CD4-positive, alpha-beta T cell (primary cell): ENCODE measurements at regions of chr11 and their contacts with region 1.

Region 1: GRCh38 chr11:117098269-117099232 is at the start of gene SIK3:
- DNase-seq: peak; percentile 90 to 98 (median 93)
- ATAC-seq: peak; percentile 69
- H3K4me3 ChIP-seq: peak within 1 kb of the TSS; percentile 89
- H3K4me3 Mint-ChIP-seq: peak within 1 kb of the TSS; percentile 100
- H3K27ac ChIP-seq: peak within 1 kb of the TSS; percentile 81 to 95
- H3K27ac Mint-ChIP-seq: peak within 1 kb of the TSS; percentile 100
- H3K4me1 ChIP-seq: peaks cover 38% of the 10 kb centered on the region
- H3K4me1 Mint-ChIP-seq: peaks cover 51% of the 10 kb centered on the region
- H3K27me3 ChIP-seq: no peaks in the 10 kb centered on the region
- H3K27me3 Mint-ChIP-seq: no peaks in the 10 kb centered on the region
- CTCF ChIP-seq: peak; percentile 67
- total RNA-seq, gene SIK3: 81.4 to 86.1 TPM

Region 2: GRCh38 chr11:116772443-116773202 is 325.9 kb before region 1 on chr11 and contains the start of gene BUD13:
- CTCF ChIA-PET with region 1: no interaction called
- POLR2A ChIA-PET with region 1: interaction called, 3 read pairs
- intact Hi-C with region 1: loop called in 1 of 2 experiments (anchors 1 kb)
- DNase-seq: peak; percentile 90 to 96 (median 94)
- ATAC-seq: peak; percentile 92
- H3K4me3 ChIP-seq: peak within 1 kb of the TSS; percentile 92
- H3K4me3 Mint-ChIP-seq: peak within 1 kb of the TSS; percentile 99
- H3K27ac ChIP-seq: peak within 1 kb of the TSS; percentile 87 to 90
- H3K27ac Mint-ChIP-seq: peak within 1 kb of the TSS; percentile 95
- H3K4me1 ChIP-seq: peaks cover 23% of the 10 kb centered on the region
- H3K4me1 Mint-ChIP-seq: peaks cover 45% of the 10 kb centered on the region
- H3K27me3 ChIP-seq: no peaks in the 10 kb centered on the region
- H3K27me3 Mint-ChIP-seq: no peaks in the 10 kb centered on the region
- CTCF ChIP-seq: peak; percentile 16
- total RNA-seq, gene BUD13: 9.2 to 10.1 TPM

Region 3: GRCh38 chr11:117037279-117037974 is 61.1 kb before region 1 on chr11:
- CTCF ChIA-PET with region 1: no interaction called
- POLR2A ChIA-PET with region 1: interaction called, 4 read pairs
- intact Hi-C with region 1: loop called in 1 of 2 experiments (anchors 5 kb)
- DNase-seq: peak in 3 of 14 experiments; percentile 37 to 42 (median 40)
- ATAC-seq: peak; percentile 26
- H3K4me3 ChIP-seq: no peak overlapping the region
- H3K4me3 Mint-ChIP-seq: peak overlapping the region; percentile 50
- H3K27ac ChIP-seq: peak overlapping the region in 1 of 2 donors; percentile 68
- H3K27ac Mint-ChIP-seq: peak overlapping the region; percentile 72
- H3K4me1 ChIP-seq: peaks cover 17% of the 10 kb centered on the region
- H3K4me1 Mint-ChIP-seq: peaks cover 72% of the 10 kb centered on the region
- H3K27me3 ChIP-seq: no peaks in the 10 kb centered on the region
- H3K27me3 Mint-ChIP-seq: no peaks in the 10 kb centered on the region
- CTCF ChIP-seq: no peak

Region 4: DNA sequence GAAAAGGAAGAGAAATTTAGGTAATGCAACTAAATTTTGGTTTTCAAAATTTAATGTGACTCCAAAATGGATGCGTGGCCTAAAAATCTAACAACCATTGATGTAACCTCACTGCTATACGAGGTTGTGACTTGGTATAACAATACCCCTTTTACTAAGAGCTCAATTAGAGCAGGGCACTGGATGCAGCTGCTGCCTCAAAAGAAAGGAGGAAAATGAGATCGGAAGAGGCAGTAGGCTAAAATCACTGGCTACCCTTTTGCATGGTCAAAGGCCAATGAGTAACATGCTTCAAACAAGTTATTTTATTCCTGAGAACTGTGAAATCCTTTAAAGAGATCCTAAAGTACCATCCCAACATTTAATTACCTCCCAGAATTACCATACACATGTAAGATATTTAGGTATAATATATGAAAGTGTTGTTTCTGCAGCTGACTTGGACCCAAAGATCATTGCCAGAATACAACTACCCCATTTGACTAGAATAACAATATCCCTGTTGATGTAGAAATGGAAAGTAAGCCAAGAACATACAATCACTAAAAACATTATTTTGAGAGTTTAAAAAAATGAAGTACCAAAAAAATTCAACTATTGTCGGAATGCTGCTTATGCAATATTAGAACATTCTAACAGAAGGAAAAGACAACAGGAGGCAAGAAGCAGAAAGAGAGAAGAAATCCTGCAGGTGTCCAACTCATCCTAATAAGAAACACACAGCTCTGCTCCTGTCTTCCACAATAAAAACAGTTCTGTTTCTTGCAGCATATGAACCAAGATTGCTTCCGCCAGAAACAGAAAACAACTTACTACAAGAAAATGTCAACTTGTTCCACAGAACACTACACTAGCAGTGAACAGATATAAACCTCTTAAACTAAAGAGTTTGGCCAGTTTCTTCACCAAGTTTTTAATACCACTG is 15.3 kb before region 1 on chr11:
- CTCF ChIA-PET with region 1: no interaction called
- POLR2A ChIA-PET with region 1: interaction called, 5 read pairs
- intact Hi-C with region 1: loop called in 1 of 2 experiments (anchors 2 kb)
- DNase-seq: no peak
- ATAC-seq: no peak
- H3K4me3 ChIP-seq: no peak overlapping the region
- H3K4me3 Mint-ChIP-seq: no peak overlapping the region
- H3K27ac ChIP-seq: no peak overlapping the region
- H3K27ac Mint-ChIP-seq: no peak overlapping the region
- H3K4me1 ChIP-seq: peaks cover 28% of the 10 kb centered on the region
- H3K4me1 Mint-ChIP-seq: peaks cover 81% of the 10 kb centered on the region
- H3K27me3 ChIP-seq: no peaks in the 10 kb centered on the region
- H3K27me3 Mint-ChIP-seq: no peaks in the 10 kb centered on the region
- CTCF ChIP-seq: no peak

Region 5: GRCh38 chr11:117634756-117635603 is 536.4 kb after region 1 on chr11:
- CTCF ChIA-PET with region 1: no interaction called
- POLR2A ChIA-PET with region 1: no interaction called
- intact Hi-C with region 1: no loop called
- DNase-seq: no peak
- ATAC-seq: no peak
- H3K4me3 ChIP-seq: no peak overlapping the region
- H3K4me3 Mint-ChIP-seq: no peak overlapping the region
- H3K27ac ChIP-seq: no peak overlapping the region
- H3K27ac Mint-ChIP-seq: no peak overlapping the region
- H3K4me1 ChIP-seq: no peaks in the 10 kb centered on the region
- H3K4me1 Mint-ChIP-seq: no peaks in the 10 kb centered on the region
- H3K27me3 ChIP-seq: no peaks in the 10 kb centered on the region
- H3K27me3 Mint-ChIP-seq: peaks cover 3% of the 10 kb centered on the region
- CTCF ChIP-seq: no peak